CD14-positive monocyte (primary cell): ENCODE measurements at regions of chr12 and their contacts with region 1.

Region 1: GRCh38 chr12:12562585-12563261 is at the start of gene DUSP16:
- DNase-seq: peak; percentile 78 to 90 (median 80)
- H3K4me3 ChIP-seq: peak within 1 kb of the TSS; percentile 60 to 82 (median 76)
- H3K4me3 Mint-ChIP-seq: peak within 1 kb of the TSS; percentile 83 to 90
- H3K27ac ChIP-seq: peak within 1 kb of the TSS in 1 of 2 donors; percentile 51
- H3K27ac Mint-ChIP-seq: peak within 1 kb of the TSS; percentile 81 to 94 (median 88)
- H3K4me1 ChIP-seq: peaks cover 15% of the 10 kb centered on the region in 2 donors
- H3K4me1 Mint-ChIP-seq: peaks cover 14% of the 10 kb centered on the region
- H3K27me3 ChIP-seq: no peaks in the 10 kb centered on the region
- H3K27me3 Mint-ChIP-seq: peaks cover 2 to 4% (median 3%) of the 10 kb centered on the region in 3 donors
- CTCF ChIP-seq: no peak
- polyA plus RNA-seq, gene DUSP16: 0.04 to 0.46 (median 0.27) TPM

Region 2: DNA sequence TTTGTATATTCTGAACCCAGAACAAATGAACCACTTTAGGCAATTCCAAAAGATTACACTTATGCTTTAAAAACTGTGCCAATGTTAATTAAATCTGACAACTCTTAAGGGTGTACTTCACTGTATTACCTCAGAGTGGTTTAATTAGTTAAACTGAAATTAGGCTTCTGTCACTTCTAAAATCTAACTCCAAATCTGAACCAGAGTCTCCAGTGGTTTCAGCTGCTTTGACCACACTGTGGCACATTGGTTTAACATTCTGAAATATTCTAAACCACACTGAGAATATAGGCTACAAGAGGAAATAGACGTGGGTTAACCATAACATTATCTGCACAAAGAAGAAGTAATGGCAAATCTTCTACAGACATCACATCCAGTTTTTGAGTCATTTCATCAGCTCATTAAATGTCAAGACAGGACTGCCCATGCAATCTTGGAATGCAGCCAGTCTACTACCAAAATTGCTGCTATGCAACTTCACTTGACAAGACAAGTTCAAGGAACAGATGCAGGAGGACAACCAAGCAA is 390.7 kb before region 1 on chr12:
- intact Hi-C with region 1: no loop called
- DNase-seq: no peak
- H3K4me3 ChIP-seq: no peak overlapping the region
- H3K4me3 Mint-ChIP-seq: no peak overlapping the region
- H3K27ac ChIP-seq: no peak overlapping the region
- H3K27ac Mint-ChIP-seq: no peak overlapping the region
- H3K4me1 ChIP-seq: no peaks in the 10 kb centered on the region
- H3K4me1 Mint-ChIP-seq: no peaks in the 10 kb centered on the region
- H3K27me3 ChIP-seq: peaks cover 0 to 2% of the 10 kb centered on the region in 2 donors
- H3K27me3 Mint-ChIP-seq: peaks cover 11 to 14% (median 13%) of the 10 kb centered on the region in 3 donors
- CTCF ChIP-seq: no peak

Region 3: GRCh38 chr12:12376646-12377448 is 185.9 kb before region 1 on chr12:
- intact Hi-C with region 1: loop called (anchors 2 to 5 kb)
- DNase-seq: peak; percentile 56 to 88 (median 69)
- H3K4me3 ChIP-seq: no peak overlapping the region
- H3K4me3 Mint-ChIP-seq: no peak overlapping the region
- H3K27ac ChIP-seq: no peak overlapping the region
- H3K27ac Mint-ChIP-seq: peak overlapping the region in 3 of 7 donors; percentile 78 to 82 (median 80)
- H3K4me1 ChIP-seq: peaks cover 16 to 22% of the 10 kb centered on the region in 2 donors
- H3K4me1 Mint-ChIP-seq: peaks cover 23% of the 10 kb centered on the region
- H3K27me3 ChIP-seq: no peaks in the 10 kb centered on the region
- H3K27me3 Mint-ChIP-seq: peaks cover 0 to 2% (median 0%) of the 10 kb centered on the region in 3 donors
- CTCF ChIP-seq: peak; percentile 74

Region 4: GRCh38 chr12:12442548-12443071 is 120.1 kb before region 1 on chr12:
- intact Hi-C with region 1: loop called in 1 of 2 experiments (anchors 10 kb)
- DNase-seq: peak in 1 of 3 donors; percentile 35
- H3K4me3 ChIP-seq: no peak overlapping the region
- H3K4me3 Mint-ChIP-seq: no peak overlapping the region
- H3K27ac ChIP-seq: no peak overlapping the region
- H3K27ac Mint-ChIP-seq: peak overlapping the region in 2 of 7 donors; percentile 11 to 34
- H3K4me1 ChIP-seq: peaks cover 7 to 10% of the 10 kb centered on the region in 2 donors
- H3K4me1 Mint-ChIP-seq: peaks cover 18% of the 10 kb centered on the region
- H3K27me3 ChIP-seq: no peaks in the 10 kb centered on the region
- H3K27me3 Mint-ChIP-seq: peaks cover 0 to 1% (median 0%) of the 10 kb centered on the region in 3 donors
- CTCF ChIP-seq: no peak

Region 5: DNA sequence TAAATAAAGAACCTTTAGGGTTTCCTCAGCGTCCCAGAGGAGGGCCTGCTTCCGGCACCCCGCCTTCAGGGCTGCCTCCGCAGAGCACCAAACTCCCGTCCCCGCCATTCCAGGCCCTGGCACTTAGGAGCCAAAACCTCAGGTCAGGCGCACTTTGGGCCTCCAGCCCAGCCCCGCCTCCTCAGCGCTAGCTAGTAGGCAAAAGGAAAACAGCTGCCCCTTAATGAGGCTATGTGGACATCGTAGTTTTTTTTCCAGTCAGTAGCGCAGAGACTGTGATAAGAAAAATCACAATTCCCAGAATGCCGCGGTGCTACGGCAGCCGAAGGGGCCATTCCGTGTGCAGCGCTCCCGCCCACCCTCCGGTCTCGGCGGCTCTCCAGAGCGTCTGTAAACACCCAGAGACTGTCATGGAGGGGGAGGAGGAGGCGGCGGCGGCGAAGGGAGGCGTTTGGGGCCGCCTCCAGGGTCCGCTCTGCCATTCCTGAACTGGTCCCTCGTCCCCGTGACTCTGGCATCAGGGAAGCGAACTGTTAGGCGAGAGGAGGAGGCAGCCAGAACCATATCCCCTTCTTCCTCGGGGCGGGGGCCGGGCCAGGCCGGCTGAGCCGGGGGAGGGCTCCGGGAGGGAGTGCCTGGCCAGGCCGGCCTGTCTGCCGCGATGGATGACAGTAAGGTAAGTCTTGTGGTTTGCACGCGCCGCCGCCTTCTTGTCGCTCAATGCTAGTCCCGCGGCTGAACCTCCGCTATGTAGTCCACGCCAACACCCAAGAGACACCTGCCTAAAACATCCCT is 49.0 kb after region 1 on chr12 and contains the start of gene CREBL2:
- intact Hi-C with region 1: loop called in 1 of 2 experiments (anchors 5 kb)
- DNase-seq: peak; percentile 77 to 86 (median 85)
- H3K4me3 ChIP-seq: peak within 1 kb of the TSS; percentile 62 to 84 (median 67)
- H3K4me3 Mint-ChIP-seq: peak within 1 kb of the TSS; percentile 93
- H3K27ac ChIP-seq: peak within 1 kb of the TSS; percentile 77 to 87
- H3K27ac Mint-ChIP-seq: peak within 1 kb of the TSS; percentile 89 to 94 (median 91)
- H3K4me1 ChIP-seq: peaks cover 41 to 46% of the 10 kb centered on the region in 2 donors
- H3K4me1 Mint-ChIP-seq: peaks cover 48% of the 10 kb centered on the region
- H3K27me3 ChIP-seq: no peaks in the 10 kb centered on the region
- H3K27me3 Mint-ChIP-seq: no peaks in the 10 kb centered on the region
- CTCF ChIP-seq: no peak
- polyA plus RNA-seq, gene CREBL2: 14.4 to 45.9 (median 38.2) TPM

Region 6: DNA sequence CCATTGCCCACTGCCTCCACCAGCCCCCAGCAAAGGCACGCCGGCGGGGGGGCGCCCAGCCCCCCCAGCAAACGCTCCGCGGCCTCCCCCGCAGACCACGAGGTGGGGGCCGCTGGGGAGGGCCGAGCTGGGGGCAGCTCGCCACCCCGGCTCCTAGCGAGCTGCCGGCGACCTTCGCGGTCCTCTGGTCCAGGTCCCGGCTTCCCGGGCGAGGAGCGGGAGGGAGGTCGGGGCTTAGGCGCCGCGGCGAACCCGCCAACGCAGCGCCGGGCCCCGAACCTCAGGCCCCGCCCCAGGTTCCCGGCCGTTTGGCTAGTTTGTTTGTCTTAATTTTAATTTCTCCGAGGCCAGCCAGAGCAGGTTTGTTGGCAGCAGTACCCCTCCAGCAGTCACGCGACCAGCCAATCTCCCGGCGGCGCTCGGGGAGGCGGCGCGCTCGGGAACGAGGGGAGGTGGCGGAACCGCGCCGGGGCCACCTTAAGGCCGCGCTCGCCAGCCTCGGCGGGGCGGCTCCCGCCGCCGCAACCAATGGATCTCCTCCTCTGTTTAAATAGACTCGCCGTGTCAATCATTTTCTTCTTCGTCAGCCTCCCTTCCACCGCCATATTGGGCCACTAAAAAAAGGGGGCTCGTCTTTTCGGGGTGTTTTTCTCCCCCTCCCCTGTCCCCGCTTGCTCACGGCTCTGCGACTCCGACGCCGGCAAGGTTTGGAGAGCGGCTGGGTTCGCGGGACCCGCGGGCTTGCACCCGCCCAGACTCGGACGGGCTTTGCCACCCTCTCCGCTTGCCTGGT is 154.3 kb after region 1 on chr12 and contains the start of gene CDKN1B:
- intact Hi-C with region 1: loop called in 1 of 2 experiments (anchors 5 kb)
- DNase-seq: peak; percentile 78 to 84 (median 84)
- H3K4me3 ChIP-seq: peak within 1 kb of the TSS; percentile 85 to 99 (median 92)
- H3K4me3 Mint-ChIP-seq: peak within 1 kb of the TSS; percentile 97 to 99
- H3K27ac ChIP-seq: peak within 1 kb of the TSS; percentile 96 to 97
- H3K27ac Mint-ChIP-seq: peak within 1 kb of the TSS; percentile 97 to 99 (median 98)
- H3K4me1 ChIP-seq: peaks cover 44 to 54% of the 10 kb centered on the region in 2 donors
- H3K4me1 Mint-ChIP-seq: peaks cover 53% of the 10 kb centered on the region
- H3K27me3 ChIP-seq: no peaks in the 10 kb centered on the region
- H3K27me3 Mint-ChIP-seq: peaks cover 0 to 1% (median 0%) of the 10 kb centered on the region in 3 donors
- CTCF ChIP-seq: no peak
- polyA plus RNA-seq, gene CDKN1B: 9.2 to 98.1 (median 9.5) TPM